Mammary epithelial cell (primary cell): ENCODE measurements at regions of chr4 and their contacts with region 1.

Region 1: GRCh38 chr4:130705023-130705422 is 1609.1 kb downstream of the C4orf33 start:
- DNase-seq: peak; percentile 36
- H3K4me3 ChIP-seq: no peak overlapping the region
- H3K27ac ChIP-seq: peak overlapping the region; percentile 58
- H3K4me1 ChIP-seq: peaks cover 24% of the 10 kb centered on the region
- H3K27me3 ChIP-seq: no peaks in the 10 kb centered on the region
- CTCF ChIP-seq: peak; percentile 37 to 50

Region 2: GRCh38 chr4:130359542-130359941 is 345.5 kb before region 1 on chr4:
- CTCF ChIA-PET with region 1: no interaction called
- dilution Hi-C with region 1: no loop called
- in situ Hi-C with region 1: no loop called
- intact Hi-C with region 1: loop called (anchors 5 kb)
- DNase-seq: no peak
- H3K4me3 ChIP-seq: no peak overlapping the region
- H3K27ac ChIP-seq: no peak overlapping the region
- H3K4me1 ChIP-seq: no peaks in the 10 kb centered on the region
- H3K27me3 ChIP-seq: peaks cover 2% of the 10 kb centered on the region
- CTCF ChIP-seq: peak; percentile 36 to 52

Region 3: GRCh38 chr4:130648570-130648969 is 56.5 kb before region 1 on chr4:
- CTCF ChIA-PET with region 1: no interaction called
- dilution Hi-C with region 1: no loop called
- in situ Hi-C with region 1: no loop called
- intact Hi-C with region 1: no loop called
- DNase-seq: no peak
- H3K4me3 ChIP-seq: no peak overlapping the region
- H3K27ac ChIP-seq: no peak overlapping the region
- H3K4me1 ChIP-seq: no peaks in the 10 kb centered on the region
- H3K27me3 ChIP-seq: no peaks in the 10 kb centered on the region
- CTCF ChIP-seq: no peak

Region 4: DNA sequence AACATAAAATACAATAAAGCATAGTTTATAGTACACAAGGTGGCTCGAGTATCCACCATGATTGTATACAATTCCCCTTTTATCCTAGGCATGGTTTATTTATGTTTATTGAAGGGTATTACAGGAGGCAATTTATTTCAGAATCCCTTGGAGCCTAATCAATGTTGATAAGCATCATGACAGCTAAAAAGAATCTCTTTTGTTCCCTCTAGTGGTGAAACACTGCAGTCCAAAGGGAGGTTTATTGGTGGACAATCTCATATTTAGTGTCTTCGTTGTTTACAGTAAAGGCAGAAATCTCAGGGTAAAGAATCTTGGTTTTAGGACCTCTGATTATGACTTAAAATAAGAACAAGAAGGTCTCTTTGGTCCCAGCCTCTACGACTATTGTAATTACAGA is 103.5 kb after region 1 on chr4:
- CTCF ChIA-PET with region 1: interaction called, 16 read pairs
- dilution Hi-C with region 1: no loop called
- in situ Hi-C with region 1: no loop called
- intact Hi-C with region 1: no loop called
- DNase-seq: peak; percentile 24
- H3K4me3 ChIP-seq: no peak overlapping the region
- H3K27ac ChIP-seq: no peak overlapping the region
- H3K4me1 ChIP-seq: no peaks in the 10 kb centered on the region
- H3K27me3 ChIP-seq: no peaks in the 10 kb centered on the region
- CTCF ChIP-seq: peak; percentile 76 to 78

Region 5: DNA sequence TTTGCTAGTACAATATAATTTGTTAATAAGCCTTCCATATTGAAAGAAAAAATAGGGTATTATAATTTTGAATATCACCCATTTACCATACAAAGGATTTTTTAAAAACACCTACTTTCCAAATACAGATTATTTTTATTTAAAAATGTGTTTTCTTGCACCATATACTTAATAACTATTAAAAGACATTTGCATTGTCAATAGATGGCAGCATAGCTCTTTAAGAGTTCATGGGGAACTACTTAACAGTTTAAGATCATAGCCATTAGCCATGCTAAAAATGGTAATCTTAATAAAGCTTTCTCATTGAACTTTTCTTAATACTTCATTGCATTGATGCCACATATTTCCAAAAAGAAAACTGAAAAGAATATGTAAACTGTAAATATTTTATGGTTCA is 386.9 kb after region 1 on chr4:
- CTCF ChIA-PET with region 1: no interaction called
- dilution Hi-C with region 1: no loop called
- in situ Hi-C with region 1: no loop called
- intact Hi-C with region 1: loop called (anchors 10 kb)
- DNase-seq: peak; percentile 21
- H3K4me3 ChIP-seq: no peak overlapping the region
- H3K27ac ChIP-seq: no peak overlapping the region
- H3K4me1 ChIP-seq: no peaks in the 10 kb centered on the region
- H3K27me3 ChIP-seq: no peaks in the 10 kb centered on the region
- CTCF ChIP-seq: peak; percentile 38 to 61

Region 6: DNA sequence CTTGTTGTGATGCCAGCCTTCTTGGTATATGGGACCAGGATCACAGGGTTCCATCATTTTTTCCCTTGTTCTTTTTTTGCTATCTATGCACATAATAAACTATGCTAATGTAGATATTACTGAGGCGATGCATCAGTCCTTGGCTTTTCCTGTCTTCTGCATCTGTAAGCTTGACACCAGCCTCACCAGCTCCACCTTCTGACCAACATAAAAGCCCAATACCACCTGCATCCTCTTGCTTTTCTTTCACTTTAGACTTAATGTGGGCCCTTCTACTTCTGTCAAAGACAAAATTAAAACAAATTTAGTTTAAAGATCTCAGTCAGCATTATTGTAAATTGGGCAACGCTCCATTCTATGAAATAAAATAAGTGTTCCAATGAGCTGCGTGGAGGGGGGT is 725.3 kb after region 1 on chr4:
- CTCF ChIA-PET with region 1: no interaction called
- dilution Hi-C with region 1: no loop called
- in situ Hi-C with region 1: no loop called
- intact Hi-C with region 1: loop called (anchors 5 kb)
- DNase-seq: peak; percentile 3
- H3K4me3 ChIP-seq: no peak overlapping the region
- H3K27ac ChIP-seq: no peak overlapping the region
- H3K4me1 ChIP-seq: no peaks in the 10 kb centered on the region
- H3K27me3 ChIP-seq: no peaks in the 10 kb centered on the region
- CTCF ChIP-seq: peak; percentile 20 to 47

Region 7: GRCh38 chr4:131644619-131645018 is 939.6 kb after region 1 on chr4:
- CTCF ChIA-PET with region 1: no interaction called
- dilution Hi-C with region 1: no loop called
- in situ Hi-C with region 1: no loop called
- intact Hi-C with region 1: loop called (anchors 2 kb)
- DNase-seq: peak; percentile 45
- H3K4me3 ChIP-seq: no peak overlapping the region
- H3K27ac ChIP-seq: no peak overlapping the region
- H3K4me1 ChIP-seq: no peaks in the 10 kb centered on the region
- H3K27me3 ChIP-seq: no peaks in the 10 kb centered on the region
- CTCF ChIP-seq: peak; percentile 78 to 90